ENCODE measurements at regions of chr17 and their contacts with region 1.

Region 1: DNA sequence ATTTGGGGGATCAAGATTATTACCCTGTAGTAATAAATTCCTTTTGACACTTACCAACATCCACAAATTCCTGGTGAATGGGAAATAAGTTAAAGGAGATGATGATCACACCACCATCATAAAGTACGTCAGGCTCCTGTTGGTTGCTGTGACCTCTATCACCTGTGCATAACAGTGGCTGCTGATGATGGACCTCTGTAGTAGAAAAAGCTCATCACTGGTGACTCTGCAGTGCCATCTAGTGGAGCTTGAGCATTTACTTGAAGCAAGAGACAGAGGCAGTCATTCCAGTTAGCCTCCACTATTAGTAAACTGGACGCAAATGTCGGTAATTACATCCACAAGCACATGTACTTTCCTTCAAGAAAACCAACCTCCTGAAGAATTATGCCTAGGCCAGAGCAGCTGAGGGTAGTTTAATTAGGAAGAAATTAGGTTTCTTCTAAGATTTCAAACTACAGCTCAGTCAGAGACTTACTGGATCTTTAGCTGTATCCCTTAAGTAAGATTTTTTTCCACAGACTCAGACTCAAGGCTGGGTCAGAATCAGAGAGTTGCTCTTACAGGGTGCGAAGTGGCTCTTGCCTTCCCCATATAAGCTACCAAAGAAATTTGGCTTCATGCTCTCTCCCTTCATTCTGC is 39.3 kb downstream of the CYB561 start:
- DNase-seq: peak; percentile 74
- H3K4me3 Mint-ChIP-seq: no peak overlapping the region
- H3K27ac Mint-ChIP-seq: no peak overlapping the region
- H3K4me1 Mint-ChIP-seq: peaks cover 11% of the 10 kb centered on the region
- H3K27me3 Mint-ChIP-seq: no peaks in the 10 kb centered on the region

Region 2: GRCh38 chr17:62703775-62704378 is 702.9 kb before region 1 on chr17:
- CTCF ChIA-PET with region 1: interaction called, 5 read pairs
- POLR2A ChIA-PET with region 1: no interaction called
- intact Hi-C with region 1: loop called (anchors 2 kb)
- DNase-seq: peak; percentile 79
- H3K4me3 Mint-ChIP-seq: peak overlapping the region; percentile 20
- H3K27ac Mint-ChIP-seq: no peak overlapping the region
- H3K4me1 Mint-ChIP-seq: peaks cover 10% of the 10 kb centered on the region
- H3K27me3 Mint-ChIP-seq: peaks cover 23% of the 10 kb centered on the region

Region 3: GRCh38 chr17:62995377-62995885 is 411.4 kb before region 1 on chr17:
- CTCF ChIA-PET with region 1: interaction called, 100 read pairs
- POLR2A ChIA-PET with region 1: no interaction called
- intact Hi-C with region 1: loop called (anchors 1 kb)
- DNase-seq: peak; percentile 49
- H3K4me3 Mint-ChIP-seq: no peak overlapping the region
- H3K27ac Mint-ChIP-seq: no peak overlapping the region
- H3K4me1 Mint-ChIP-seq: peaks cover 3% of the 10 kb centered on the region
- H3K27me3 Mint-ChIP-seq: no peaks in the 10 kb centered on the region

Region 4: GRCh38 chr17:63116225-63116624 is 290.6 kb before region 1 on chr17:
- CTCF ChIA-PET with region 1: interaction called, 11 read pairs
- POLR2A ChIA-PET with region 1: no interaction called
- intact Hi-C with region 1: no loop called
- DNase-seq: no peak
- H3K4me3 Mint-ChIP-seq: no peak overlapping the region
- H3K27ac Mint-ChIP-seq: no peak overlapping the region
- H3K4me1 Mint-ChIP-seq: no peaks in the 10 kb centered on the region
- H3K27me3 Mint-ChIP-seq: no peaks in the 10 kb centered on the region

Region 5: DNA sequence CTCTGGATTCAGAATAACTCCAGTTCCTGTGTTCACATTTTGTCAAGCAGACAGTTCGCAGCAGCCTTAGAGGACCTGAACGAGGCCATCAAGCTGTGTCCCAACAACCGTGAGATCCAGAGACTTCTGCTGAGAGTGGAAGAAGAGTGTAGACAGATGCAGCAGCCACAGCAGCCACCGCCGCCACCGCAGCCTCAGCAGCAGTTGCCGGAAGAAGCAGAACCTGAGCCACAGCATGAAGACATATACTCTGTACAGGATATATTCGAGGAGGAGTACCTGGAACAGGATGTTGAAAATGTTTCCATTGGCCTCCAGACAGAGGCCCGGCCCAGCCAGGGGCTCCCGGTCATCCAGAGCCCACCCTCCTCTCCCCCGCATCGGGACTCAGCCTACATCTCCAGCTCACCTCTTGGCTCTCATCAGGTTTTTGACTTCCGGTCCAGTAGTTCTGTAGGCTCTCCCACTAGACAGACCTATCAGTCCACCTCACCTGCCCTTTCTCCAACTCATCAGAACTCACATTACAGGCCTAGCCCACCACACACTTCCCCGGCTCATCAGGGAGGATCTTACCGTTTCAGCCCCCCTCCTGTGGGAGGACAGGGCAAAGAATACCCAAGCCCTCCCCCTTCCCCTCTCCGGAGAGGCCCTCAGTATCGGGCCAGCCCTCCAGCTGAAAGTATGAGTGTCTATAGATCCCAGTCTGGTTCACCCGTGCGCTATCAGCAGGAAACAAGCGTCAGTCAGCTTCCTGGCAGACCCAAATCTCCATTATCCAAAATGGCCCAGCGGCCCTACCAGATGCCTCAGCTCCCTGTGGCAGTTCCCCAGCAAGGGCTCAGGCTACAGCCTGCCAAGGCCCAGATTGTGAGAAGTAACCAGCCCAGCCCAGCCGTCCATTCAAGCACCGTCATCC is 13.4 kb after region 1 on chr17:
- CTCF ChIA-PET with region 1: interaction called, 27 read pairs
- POLR2A ChIA-PET with region 1: interaction called, 3 read pairs
- intact Hi-C with region 1: no loop called
- DNase-seq: peak; percentile 62
- H3K4me3 Mint-ChIP-seq: no peak overlapping the region
- H3K27ac Mint-ChIP-seq: peak overlapping the region; percentile 50
- H3K4me1 Mint-ChIP-seq: peaks cover 13% of the 10 kb centered on the region
- H3K27me3 Mint-ChIP-seq: no peaks in the 10 kb centered on the region

Region 6: GRCh38 chr17:63478791-63479494 is 72.1 kb after region 1 on chr17:
- CTCF ChIA-PET with region 1: interaction called, 13 read pairs
- POLR2A ChIA-PET with region 1: no interaction called
- intact Hi-C with region 1: no loop called
- DNase-seq: peak; percentile 88
- H3K4me3 Mint-ChIP-seq: peak overlapping the region; percentile 16
- H3K27ac Mint-ChIP-seq: no peak overlapping the region
- H3K4me1 Mint-ChIP-seq: peaks cover 15% of the 10 kb centered on the region
- H3K27me3 Mint-ChIP-seq: peaks cover 5% of the 10 kb centered on the region

Region 7: DNA sequence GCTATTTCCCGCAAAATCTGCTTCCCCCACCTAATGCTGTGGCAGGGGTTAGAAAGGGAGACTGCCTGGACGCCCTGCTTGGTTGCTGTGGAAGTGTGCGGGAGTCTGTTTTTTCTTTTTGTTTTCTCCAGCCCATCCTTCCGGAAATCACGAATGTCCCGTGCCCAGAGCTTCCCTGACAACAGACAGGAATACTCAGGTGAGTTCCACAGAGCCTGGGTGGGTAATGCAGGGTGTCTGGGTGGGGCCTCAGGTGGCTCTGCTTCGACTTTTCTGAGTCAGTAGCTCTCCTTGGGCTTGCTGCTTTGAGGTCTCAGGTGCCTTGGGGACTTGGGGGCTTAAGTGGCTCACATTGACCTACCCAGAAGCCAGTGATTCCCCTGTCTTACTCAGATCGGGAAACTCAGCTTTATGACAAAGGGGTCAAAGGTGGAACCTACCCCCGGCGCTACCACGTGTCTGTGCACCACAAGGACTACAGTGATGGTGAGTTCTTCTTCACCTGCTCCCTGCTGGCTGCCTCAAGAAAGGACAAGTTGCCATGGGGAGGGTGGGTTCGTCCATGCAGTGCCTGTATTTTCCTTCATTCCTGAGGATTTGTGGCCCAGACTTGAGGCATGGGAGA is 281.7 kb after region 1 on chr17:
- CTCF ChIA-PET with region 1: no interaction called
- POLR2A ChIA-PET with region 1: no interaction called
- intact Hi-C with region 1: no loop called
- DNase-seq: peak; percentile 41
- H3K4me3 Mint-ChIP-seq: no peak overlapping the region
- H3K27ac Mint-ChIP-seq: peak overlapping the region; percentile 65
- H3K4me1 Mint-ChIP-seq: peaks cover 22% of the 10 kb centered on the region
- H3K27me3 Mint-ChIP-seq: no peaks in the 10 kb centered on the region